ENCODE measurements at regions of chr11 and their contacts with region 1.

Region 1: DNA sequence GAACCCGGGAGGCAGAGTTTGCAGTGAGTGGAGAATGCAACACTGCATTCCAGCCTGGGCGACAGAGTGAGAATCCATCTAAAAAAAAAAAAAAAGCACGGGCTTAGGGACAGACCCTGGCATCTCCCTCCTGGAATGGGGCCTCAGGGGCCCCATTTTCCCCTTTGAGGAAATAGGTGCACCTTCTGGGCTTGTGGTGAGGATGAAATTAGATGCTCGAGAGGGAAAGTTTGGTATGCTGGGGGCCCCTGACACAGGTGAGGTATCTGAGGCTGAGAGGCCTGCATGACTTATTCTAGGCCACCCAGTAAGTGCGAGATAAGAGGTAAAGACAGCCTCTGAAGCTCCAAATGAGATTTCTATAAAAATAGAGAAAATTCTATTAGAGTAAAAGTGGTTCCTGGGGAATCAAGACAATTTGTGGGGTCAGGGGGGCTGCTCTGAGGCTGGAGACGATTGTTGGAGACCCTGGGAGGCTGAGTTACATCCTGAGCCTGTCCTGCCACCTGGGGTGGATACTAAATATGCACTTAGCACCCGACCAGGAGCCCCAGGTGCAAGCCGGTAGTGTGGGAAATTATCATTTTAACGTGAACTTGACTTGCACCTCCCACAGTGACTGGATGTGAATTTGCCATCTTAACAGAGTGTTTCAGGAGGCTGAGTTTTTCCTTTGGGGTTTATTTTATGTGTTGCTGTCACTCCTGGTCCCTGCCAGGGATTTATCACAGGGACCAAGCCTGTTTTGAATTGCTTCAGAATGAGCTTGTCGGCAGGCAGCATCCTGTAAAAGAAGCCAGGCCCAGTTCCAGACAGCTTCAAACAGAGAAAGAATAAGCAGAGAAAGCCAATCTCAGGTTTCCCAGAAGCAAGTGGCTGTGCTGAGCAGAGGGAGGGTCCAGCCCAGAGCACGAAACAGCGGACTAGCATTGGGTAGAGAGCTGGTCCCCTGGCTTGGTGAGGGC is 48.4 kb upstream of the TSKU start:
- DNase-seq: no peak
- ATAC-seq: no peak
- H3K4me3 ChIP-seq: no peak overlapping the region
- H3K27ac ChIP-seq: no peak overlapping the region
- H3K4me1 ChIP-seq: no peaks in the 10 kb centered on the region
- H3K27me3 ChIP-seq: no peaks in the 10 kb centered on the region
- CTCF ChIP-seq: no peak
- POLR2A ChIP-seq: no peak

Region 2: GRCh38 chr11:76371170-76371569 is 363.6 kb before region 1 on chr11:
- intact Hi-C with region 1: no loop called
- DNase-seq: peak in 2 of 4 donors; percentile 40 to 45
- ATAC-seq: peak; percentile 45
- H3K4me3 ChIP-seq: no peak overlapping the region
- H3K27ac ChIP-seq: peak overlapping the region; percentile 19 to 88 (median 74)
- H3K4me1 ChIP-seq: peaks cover 91% of the 10 kb centered on the region
- H3K27me3 ChIP-seq: no peaks in the 10 kb centered on the region
- CTCF ChIP-seq: no peak
- POLR2A ChIP-seq: peak in 1 of 3 donors; percentile 27

Region 3: GRCh38 chr11:76799066-76799804 is 64.5 kb after region 1 on chr11:
- intact Hi-C with region 1: loop called (anchors 5 kb)
- DNase-seq: peak; percentile 78 to 88 (median 84)
- ATAC-seq: peak; percentile 77
- H3K4me3 ChIP-seq: no peak overlapping the region
- H3K27ac ChIP-seq: peak overlapping the region; percentile 6 to 76 (median 72)
- H3K4me1 ChIP-seq: peaks cover 55% of the 10 kb centered on the region
- H3K27me3 ChIP-seq: no peaks in the 10 kb centered on the region
- CTCF ChIP-seq: peak; percentile 73 to 97 (median 81)
- POLR2A ChIP-seq: no peak

Region 4: GRCh38 chr11:77047007-77047927 is 312.5 kb after region 1 on chr11:
- intact Hi-C with region 1: loop called (anchors 10 kb)
- DNase-seq: peak; percentile 80 to 94 (median 88)
- ATAC-seq: peak; percentile 89
- H3K4me3 ChIP-seq: no peak overlapping the region
- H3K27ac ChIP-seq: peak overlapping the region in 3 of 4 donors; percentile 55 to 76 (median 62)
- H3K4me1 ChIP-seq: peaks cover 4% of the 10 kb centered on the region
- H3K27me3 ChIP-seq: no peaks in the 10 kb centered on the region
- CTCF ChIP-seq: peak; percentile 32 to 95 (median 86)
- POLR2A ChIP-seq: no peak

Region 5: DNA sequence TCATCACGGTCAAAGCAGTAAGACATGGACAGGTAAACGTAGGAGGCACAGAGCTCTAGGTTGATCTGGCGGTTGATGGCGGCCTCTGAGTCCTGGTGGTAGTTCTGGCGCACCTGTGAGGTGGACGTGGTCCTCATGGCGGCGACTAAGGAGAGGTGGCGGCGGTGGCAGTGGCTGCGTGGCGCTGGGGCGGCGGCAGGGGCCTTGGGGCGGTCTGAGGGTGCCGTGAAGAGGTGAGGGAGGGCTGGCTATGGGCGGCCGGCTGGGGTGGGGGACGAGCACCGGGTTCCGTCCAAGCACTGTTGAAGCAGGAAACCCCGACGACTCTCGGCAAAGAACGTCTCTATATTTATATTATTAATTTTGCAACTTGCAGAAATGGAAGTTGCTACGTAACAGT is 1000.2 kb after region 1 on chr11:
- intact Hi-C with region 1: no loop called
- DNase-seq: no peak
- ATAC-seq: no peak
- H3K4me3 ChIP-seq: no peak overlapping the region
- H3K27ac ChIP-seq: no peak overlapping the region
- H3K4me1 ChIP-seq: no peaks in the 10 kb centered on the region
- H3K27me3 ChIP-seq: no peaks in the 10 kb centered on the region
- CTCF ChIP-seq: no peak
- POLR2A ChIP-seq: no peak